Transverse colon (tissue), 4 donors: ENCODE measurements at regions of chr11 and their contacts with region 1.

Region 1: DNA sequence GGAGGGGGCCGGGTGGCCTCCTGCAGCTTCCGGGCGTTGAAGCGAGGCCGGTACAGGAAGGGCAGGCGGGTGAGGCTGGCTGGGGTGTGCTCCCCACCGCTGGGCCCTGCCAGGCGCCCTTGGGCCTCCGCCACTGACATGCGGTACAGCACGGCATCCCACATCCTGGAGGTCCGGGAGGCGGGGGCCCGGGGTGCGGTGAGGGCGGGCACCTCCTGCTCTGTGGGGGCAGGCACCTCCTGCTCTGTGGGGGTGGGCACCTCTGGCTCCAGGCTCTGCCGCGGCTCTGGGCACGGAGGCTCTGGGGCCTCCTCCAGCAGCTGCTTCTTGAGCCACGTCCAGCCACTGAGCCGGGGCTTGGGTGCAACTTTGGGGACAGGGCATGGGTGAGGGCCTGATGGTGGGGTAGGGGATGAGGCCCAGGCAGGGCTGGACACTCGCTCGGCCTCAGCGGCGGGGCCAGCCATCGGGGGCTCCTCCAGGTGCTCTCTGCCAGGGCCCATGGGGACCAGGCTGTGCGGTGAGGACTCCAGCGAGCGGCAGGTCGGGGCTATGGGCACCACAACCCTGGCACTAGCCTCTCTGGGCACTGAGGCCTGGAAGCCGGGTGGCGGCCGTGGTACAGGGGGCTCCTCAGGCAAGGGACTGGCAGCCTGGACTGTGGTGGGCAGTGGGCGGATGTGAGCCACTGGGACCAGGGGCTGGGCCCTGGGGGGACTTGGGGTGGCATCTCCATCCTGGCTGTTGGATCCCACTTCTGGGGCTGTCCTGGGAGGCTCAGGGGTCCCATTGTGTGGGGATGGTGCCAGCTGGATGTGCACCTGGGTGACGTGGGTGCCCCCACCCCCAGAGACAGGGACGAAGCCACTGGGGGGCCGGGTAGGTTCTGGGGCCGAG is 2.2 kb downstream of the PRR33 start:
- DNase-seq: peak; percentile 39
- H3K4me3 ChIP-seq: no peak overlapping the region
- H3K27ac ChIP-seq: no peak overlapping the region
- H3K4me1 ChIP-seq: peaks cover 0 to 5% (median 0%) of the 10 kb centered on the region in 4 donors
- H3K27me3 ChIP-seq: no peaks in the 10 kb centered on the region
- CTCF ChIP-seq: no peak
- EP300 ChIP-seq: no peak
- POLR2A ChIP-seq: no peak

Region 2: GRCh38 chr11:1589996-1590395 is 299.5 kb before region 1 on chr11:
- in situ Hi-C with region 1: no loop called
- intact Hi-C with region 1: loop called (anchors 2 kb)
- DNase-seq: no peak
- H3K4me3 ChIP-seq: no peak overlapping the region
- H3K27ac ChIP-seq: no peak overlapping the region
- H3K4me1 ChIP-seq: peaks cover 0 to 10% (median 2%) of the 10 kb centered on the region in 4 donors
- H3K27me3 ChIP-seq: peaks cover 14% of the 10 kb centered on the region
- CTCF ChIP-seq: no peak
- EP300 ChIP-seq: no peak
- POLR2A ChIP-seq: no peak

Region 3: GRCh38 chr11:1916986-1917670 is 27.7 kb after region 1 on chr11:
- in situ Hi-C with region 1: no loop called
- intact Hi-C with region 1: loop called (anchors 1 kb)
- DNase-seq: no peak
- H3K4me3 ChIP-seq: no peak overlapping the region
- H3K27ac ChIP-seq: no peak overlapping the region
- H3K4me1 ChIP-seq: no peaks in the 10 kb centered on the region
- H3K27me3 ChIP-seq: no peaks in the 10 kb centered on the region
- CTCF ChIP-seq: no peak
- EP300 ChIP-seq: no peak
- POLR2A ChIP-seq: no peak

Region 4: GRCh38 chr11:1943977-1944376 is 54.5 kb after region 1 on chr11:
- in situ Hi-C with region 1: no loop called
- intact Hi-C with region 1: loop called (anchors 10 kb)
- DNase-seq: peak; percentile 2
- H3K4me3 ChIP-seq: no peak overlapping the region
- H3K27ac ChIP-seq: no peak overlapping the region
- H3K4me1 ChIP-seq: peaks cover 0 to 2% (median 0%) of the 10 kb centered on the region in 4 donors
- H3K27me3 ChIP-seq: no peaks in the 10 kb centered on the region
- CTCF ChIP-seq: no peak
- EP300 ChIP-seq: no peak
- POLR2A ChIP-seq: no peak

Region 5: GRCh38 chr11:2178906-2179494 is 289.5 kb after region 1 on chr11:
- in situ Hi-C with region 1: no loop called
- intact Hi-C with region 1: no loop called
- DNase-seq: no peak
- H3K4me3 ChIP-seq: no peak overlapping the region
- H3K27ac ChIP-seq: no peak overlapping the region
- H3K4me1 ChIP-seq: no peaks in the 10 kb centered on the region
- H3K27me3 ChIP-seq: peaks cover 35% of the 10 kb centered on the region
- CTCF ChIP-seq: no peak
- EP300 ChIP-seq: no peak
- POLR2A ChIP-seq: no peak